ENCODE measurements at regions of chr9 and their contacts with region 1.

Region 1: DNA sequence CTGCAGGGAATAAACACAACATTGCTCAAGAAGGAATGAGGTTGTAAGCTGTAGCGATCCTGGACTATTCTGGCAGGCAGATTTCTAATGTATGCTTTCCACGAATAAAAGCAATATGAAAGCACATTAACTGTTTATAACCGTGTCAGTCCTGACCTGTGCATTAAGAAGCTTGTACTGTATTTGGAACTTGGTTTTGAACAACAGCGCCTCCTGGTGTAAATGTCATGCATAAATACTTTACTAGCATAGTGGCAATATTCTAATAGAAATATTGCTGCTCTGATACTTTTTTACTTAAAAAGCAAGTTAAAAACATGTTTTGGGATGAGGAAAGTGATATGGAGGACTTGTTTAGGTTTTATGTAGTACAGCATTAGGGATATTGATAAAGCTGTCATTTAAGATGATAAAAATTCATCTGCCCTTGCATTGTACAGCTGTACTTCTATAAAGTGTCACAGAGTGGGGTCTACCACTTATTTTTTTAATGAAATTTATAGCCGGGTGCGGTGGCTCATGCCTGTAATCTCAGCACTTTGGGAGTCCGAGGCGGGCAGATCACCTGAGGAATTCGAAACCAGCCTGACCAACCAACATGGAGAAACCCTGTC is 70.7 kb upstream of the GNE start:
- DNase-seq: peak; percentile 52
- ATAC-seq: peak; percentile 79
- H3K4me3 Mint-ChIP-seq: no peak overlapping the region
- H3K27ac Mint-ChIP-seq: no peak overlapping the region
- H3K4me1 Mint-ChIP-seq: peaks cover 5% of the 10 kb centered on the region
- H3K27me3 Mint-ChIP-seq: no peaks in the 10 kb centered on the region

Region 2: DNA sequence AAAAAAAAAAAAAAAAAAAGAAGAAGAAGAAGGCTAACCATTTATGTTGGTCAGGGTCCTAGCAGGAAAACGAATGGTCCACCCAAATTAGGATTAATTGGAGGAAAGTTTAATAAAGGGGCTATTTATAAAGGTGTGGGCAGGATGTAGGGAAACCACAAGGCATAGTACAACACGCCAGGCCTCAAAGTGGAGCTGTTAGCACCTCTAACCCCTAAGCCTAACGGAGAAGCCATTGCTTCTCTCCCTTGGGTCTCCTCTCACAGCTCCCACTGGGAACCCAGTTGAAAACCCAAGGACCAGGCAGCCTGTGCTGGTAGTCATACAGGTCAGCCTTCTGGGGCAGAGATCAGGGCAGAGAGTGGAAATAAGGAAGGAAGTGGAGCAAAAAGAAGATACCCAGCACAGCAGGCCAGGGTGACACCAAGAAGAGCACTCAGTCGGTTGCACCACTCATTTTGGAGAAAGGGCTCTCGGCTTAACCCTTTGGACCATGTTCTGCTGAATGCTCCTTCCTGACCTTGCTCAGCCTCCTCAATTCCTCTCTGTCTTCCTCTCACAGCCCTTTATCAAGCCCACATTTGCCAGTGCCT is 201.2 kb before region 1 on chr9:
- CTCF ChIA-PET with region 1: no interaction called
- DNase-seq: no peak
- ATAC-seq: peak; percentile 71
- H3K4me3 Mint-ChIP-seq: no peak overlapping the region
- H3K27ac Mint-ChIP-seq: peak overlapping the region; percentile 53
- H3K4me1 Mint-ChIP-seq: peaks cover 22% of the 10 kb centered on the region
- H3K27me3 Mint-ChIP-seq: peaks cover 4% of the 10 kb centered on the region

Region 3: DNA sequence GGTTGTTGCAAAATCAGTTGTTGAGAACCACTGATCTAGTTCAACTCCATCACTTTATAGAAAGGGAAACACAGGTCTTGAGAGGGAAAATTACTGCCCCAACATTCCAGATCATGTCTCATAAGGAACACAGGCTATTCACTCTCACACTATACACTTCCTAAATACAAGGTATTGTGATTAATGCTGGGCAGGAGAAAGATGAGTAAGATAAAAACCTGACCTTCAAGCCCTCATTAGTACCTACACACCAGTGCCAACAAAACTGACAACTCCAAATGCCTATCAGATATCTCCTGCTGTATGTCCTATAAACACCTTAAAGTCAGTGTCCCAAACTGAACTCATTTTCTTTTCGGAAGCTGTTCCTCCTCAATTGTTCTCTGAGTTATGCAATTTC is 78.8 kb before region 1 on chr9:
- CTCF ChIA-PET with region 1: interaction called, 34 read pairs
- DNase-seq: no peak
- ATAC-seq: no peak
- H3K4me3 Mint-ChIP-seq: no peak overlapping the region
- H3K27ac Mint-ChIP-seq: no peak overlapping the region
- H3K4me1 Mint-ChIP-seq: peaks cover 11% of the 10 kb centered on the region
- H3K27me3 Mint-ChIP-seq: no peaks in the 10 kb centered on the region

Region 4: GRCh38 chr9:36306471-36307306 is 22.2 kb before region 1 on chr9:
- CTCF ChIA-PET with region 1: interaction called, 11 read pairs
- DNase-seq: peak; percentile 43
- ATAC-seq: peak; percentile 53
- H3K4me3 Mint-ChIP-seq: no peak overlapping the region
- H3K27ac Mint-ChIP-seq: peak overlapping the region; percentile 54
- H3K4me1 Mint-ChIP-seq: peaks cover 14% of the 10 kb centered on the region
- H3K27me3 Mint-ChIP-seq: no peaks in the 10 kb centered on the region

Region 5: GRCh38 chr9:36317764-36318163 is 11.1 kb before region 1 on chr9:
- CTCF ChIA-PET with region 1: interaction called, 15 read pairs
- DNase-seq: no peak
- ATAC-seq: no peak
- H3K4me3 Mint-ChIP-seq: no peak overlapping the region
- H3K27ac Mint-ChIP-seq: no peak overlapping the region
- H3K4me1 Mint-ChIP-seq: peaks cover 7% of the 10 kb centered on the region
- H3K27me3 Mint-ChIP-seq: peaks cover 3% of the 10 kb centered on the region

Region 6: GRCh38 chr9:36656842-36657241 is 327.9 kb after region 1 on chr9:
- CTCF ChIA-PET with region 1: no interaction called
- DNase-seq: no peak
- ATAC-seq: no peak
- H3K4me3 Mint-ChIP-seq: no peak overlapping the region
- H3K27ac Mint-ChIP-seq: no peak overlapping the region
- H3K4me1 Mint-ChIP-seq: no peaks in the 10 kb centered on the region
- H3K27me3 Mint-ChIP-seq: no peaks in the 10 kb centered on the region

Measured in activated CD8-positive, alpha-beta memory T cell treated with anti-CD3 and anti-CD28 coated beads, Interleukin-2, amount 10 ng/mL, durations not matched to agents 7 days and 5 days (primary cell).